ENCODE measurements at regions of chr10 and their contacts with region 1.

Region 1: DNA sequence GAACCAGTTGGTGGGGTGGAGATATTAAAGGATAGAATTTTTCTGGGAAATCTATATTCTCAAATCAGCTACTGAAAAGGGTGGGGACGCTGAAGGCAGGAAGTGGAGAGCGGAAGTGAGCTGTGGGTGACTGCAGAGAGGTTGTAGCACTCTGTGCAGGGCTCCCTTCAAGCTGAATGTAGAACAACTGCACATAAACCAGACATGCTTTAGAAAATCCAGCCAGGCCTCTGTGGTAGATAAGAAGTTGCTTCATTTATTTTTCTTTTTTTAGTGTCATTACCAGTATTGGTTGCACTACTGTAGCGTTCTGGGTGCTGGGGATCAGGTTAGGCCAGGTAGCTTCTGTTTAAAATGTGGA is 127.8 kb downstream of the CELF2 start:
- DNase-seq: peak; percentile 81
- H3K4me3 Mint-ChIP-seq: peak overlapping the region; percentile 76
- H3K27ac Mint-ChIP-seq: peak overlapping the region; percentile 94
- H3K4me1 Mint-ChIP-seq: peaks cover 83% of the 10 kb centered on the region
- H3K27me3 Mint-ChIP-seq: no peaks in the 10 kb centered on the region

Region 2: DNA sequence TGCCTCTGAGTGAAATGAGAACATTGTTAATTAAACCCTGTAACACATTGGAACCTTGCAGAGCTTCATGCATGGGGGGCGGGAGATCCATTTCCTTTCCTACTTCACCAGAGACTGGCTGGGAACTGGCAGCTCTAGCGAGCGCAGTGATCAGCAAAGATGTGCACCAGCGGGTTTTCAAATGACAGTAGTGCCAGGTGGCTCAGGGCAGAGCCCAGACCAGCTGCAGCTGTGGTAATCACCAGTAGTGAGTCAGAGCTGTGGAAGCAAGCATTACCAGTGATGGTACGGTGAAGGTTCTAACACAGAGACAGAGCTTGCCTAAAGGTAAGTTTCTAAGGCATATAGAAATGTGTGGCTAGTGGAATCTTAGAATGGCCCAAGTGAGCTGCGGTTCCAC is 1137.5 kb before region 1 on chr10:
- CTCF ChIA-PET with region 1: no interaction called
- intact Hi-C with region 1: no loop called
- DNase-seq: no peak
- H3K4me3 Mint-ChIP-seq: no peak overlapping the region
- H3K27ac Mint-ChIP-seq: no peak overlapping the region
- H3K4me1 Mint-ChIP-seq: no peaks in the 10 kb centered on the region
- H3K27me3 Mint-ChIP-seq: peaks cover 11% of the 10 kb centered on the region

Region 3: DNA sequence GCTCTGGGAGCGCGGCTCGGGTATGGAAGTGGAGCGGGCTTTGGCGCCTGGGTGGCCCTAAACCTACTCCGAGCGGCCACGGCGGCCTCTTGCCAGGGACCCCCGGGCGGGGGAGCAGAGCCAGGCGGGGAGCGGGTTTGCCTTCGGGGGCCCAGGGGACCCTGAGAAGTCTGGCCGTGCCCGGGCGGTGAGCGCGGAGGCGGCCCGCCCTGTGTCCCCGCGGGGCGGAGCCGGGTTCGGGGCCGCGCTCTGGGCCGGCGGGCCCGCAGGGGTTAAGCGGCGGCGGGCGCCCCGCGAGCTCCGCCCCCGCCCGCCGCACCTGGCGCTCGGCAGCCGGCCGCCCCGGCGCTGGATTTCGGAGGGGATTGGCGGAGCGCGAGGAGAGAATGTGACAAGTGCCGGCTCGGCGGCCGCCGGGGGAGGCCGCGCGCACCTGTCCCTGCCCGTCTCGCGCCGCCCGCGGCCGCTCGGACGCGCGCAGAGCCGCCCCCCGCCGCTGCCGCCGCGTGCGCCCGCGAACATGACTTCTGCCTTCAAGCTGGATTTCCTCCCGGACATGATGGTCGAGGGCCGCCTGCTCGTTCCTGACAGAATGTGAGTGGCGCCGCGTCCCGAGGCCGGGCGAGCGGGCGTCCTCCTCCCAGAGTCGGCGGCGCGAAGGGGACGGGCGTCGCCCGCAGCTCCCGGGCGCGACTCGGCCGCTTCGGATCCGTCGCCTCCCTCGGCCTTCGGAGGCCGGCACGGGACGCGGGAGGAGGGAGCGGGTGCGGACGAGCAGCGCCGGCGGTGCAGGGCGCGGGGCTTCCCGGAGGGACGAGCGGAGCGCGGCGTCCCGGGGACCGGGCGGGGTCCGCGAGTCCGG is 127.7 kb before region 1 on chr10 and contains the start of gene CELF2:
- CTCF ChIA-PET with region 1: no interaction called
- intact Hi-C with region 1: loop called (anchors 5 kb)
- DNase-seq: peak; percentile 64
- H3K4me3 Mint-ChIP-seq: peak within 1 kb of the TSS; percentile 70
- H3K27ac Mint-ChIP-seq: no peak within 1 kb of the TSS
- H3K4me1 Mint-ChIP-seq: peaks cover 9% of the 10 kb centered on the region
- H3K27me3 Mint-ChIP-seq: peaks cover 69% of the 10 kb centered on the region
- total RNA-seq, gene CELF2: 68.2 to 72.2 TPM

Region 4: GRCh38 chr10:11113156-11113555 is 32.3 kb before region 1 on chr10:
- CTCF ChIA-PET with region 1: interaction called, 11 read pairs
- intact Hi-C with region 1: loop called (anchors 1 kb)
- DNase-seq: peak; percentile 41
- H3K4me3 Mint-ChIP-seq: no peak overlapping the region
- H3K27ac Mint-ChIP-seq: no peak overlapping the region
- H3K4me1 Mint-ChIP-seq: peaks cover 21% of the 10 kb centered on the region
- H3K27me3 Mint-ChIP-seq: no peaks in the 10 kb centered on the region

Region 5: GRCh38 chr10:11159543-11160215 is 14.2 kb after region 1 on chr10:
- CTCF ChIA-PET with region 1: interaction called, 99 read pairs
- intact Hi-C with region 1: loop called (anchors 1 kb)
- DNase-seq: no peak
- H3K4me3 Mint-ChIP-seq: no peak overlapping the region
- H3K27ac Mint-ChIP-seq: no peak overlapping the region
- H3K4me1 Mint-ChIP-seq: peaks cover 68% of the 10 kb centered on the region
- H3K27me3 Mint-ChIP-seq: no peaks in the 10 kb centered on the region

Region 6: GRCh38 chr10:11165591-11166543 is 20.4 kb after region 1 on chr10:
- CTCF ChIA-PET with region 1: interaction called, 99 read pairs
- intact Hi-C with region 1: loop called (anchors 1 kb)
- DNase-seq: peak; percentile 84
- H3K4me3 Mint-ChIP-seq: no peak overlapping the region
- H3K27ac Mint-ChIP-seq: no peak overlapping the region
- H3K4me1 Mint-ChIP-seq: peaks cover 26% of the 10 kb centered on the region
- H3K27me3 Mint-ChIP-seq: no peaks in the 10 kb centered on the region

Region 7: DNA sequence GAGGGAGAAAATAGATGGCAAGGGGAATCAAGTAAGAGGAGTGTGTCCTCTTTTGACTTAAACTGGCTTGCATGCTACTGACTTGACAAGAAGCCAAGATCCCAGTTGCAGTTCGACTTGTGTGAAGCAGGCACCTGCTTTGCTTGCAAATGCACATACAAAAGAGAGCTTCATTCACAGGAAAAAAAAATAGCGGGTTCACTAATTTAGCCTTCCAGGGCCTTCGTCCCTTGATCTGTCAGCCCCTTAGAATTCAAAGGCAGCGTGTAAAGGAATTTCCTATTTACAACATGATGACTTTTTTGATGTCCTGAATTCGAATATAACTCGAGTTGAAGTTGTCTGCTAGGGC is 64.3 kb after region 1 on chr10:
- CTCF ChIA-PET with region 1: no interaction called
- intact Hi-C with region 1: loop called (anchors 2 kb)
- DNase-seq: peak; percentile 38
- H3K4me3 Mint-ChIP-seq: peak overlapping the region; percentile 60
- H3K27ac Mint-ChIP-seq: peak overlapping the region; percentile 95
- H3K4me1 Mint-ChIP-seq: peaks cover 99% of the 10 kb centered on the region
- H3K27me3 Mint-ChIP-seq: no peaks in the 10 kb centered on the region

Region 8: GRCh38 chr10:11261687-11262493 is 116.4 kb after region 1 on chr10:
- CTCF ChIA-PET with region 1: no interaction called
- intact Hi-C with region 1: no loop called
- DNase-seq: no peak
- H3K4me3 Mint-ChIP-seq: no peak overlapping the region
- H3K27ac Mint-ChIP-seq: peak overlapping the region; percentile 63
- H3K4me1 Mint-ChIP-seq: peaks cover 88% of the 10 kb centered on the region
- H3K27me3 Mint-ChIP-seq: no peaks in the 10 kb centered on the region